Naive thymus-derived CD4-positive, alpha-beta T cell (primary cell): ENCODE measurements at regions of chr15 and their contacts with region 1.

Region 1: DNA sequence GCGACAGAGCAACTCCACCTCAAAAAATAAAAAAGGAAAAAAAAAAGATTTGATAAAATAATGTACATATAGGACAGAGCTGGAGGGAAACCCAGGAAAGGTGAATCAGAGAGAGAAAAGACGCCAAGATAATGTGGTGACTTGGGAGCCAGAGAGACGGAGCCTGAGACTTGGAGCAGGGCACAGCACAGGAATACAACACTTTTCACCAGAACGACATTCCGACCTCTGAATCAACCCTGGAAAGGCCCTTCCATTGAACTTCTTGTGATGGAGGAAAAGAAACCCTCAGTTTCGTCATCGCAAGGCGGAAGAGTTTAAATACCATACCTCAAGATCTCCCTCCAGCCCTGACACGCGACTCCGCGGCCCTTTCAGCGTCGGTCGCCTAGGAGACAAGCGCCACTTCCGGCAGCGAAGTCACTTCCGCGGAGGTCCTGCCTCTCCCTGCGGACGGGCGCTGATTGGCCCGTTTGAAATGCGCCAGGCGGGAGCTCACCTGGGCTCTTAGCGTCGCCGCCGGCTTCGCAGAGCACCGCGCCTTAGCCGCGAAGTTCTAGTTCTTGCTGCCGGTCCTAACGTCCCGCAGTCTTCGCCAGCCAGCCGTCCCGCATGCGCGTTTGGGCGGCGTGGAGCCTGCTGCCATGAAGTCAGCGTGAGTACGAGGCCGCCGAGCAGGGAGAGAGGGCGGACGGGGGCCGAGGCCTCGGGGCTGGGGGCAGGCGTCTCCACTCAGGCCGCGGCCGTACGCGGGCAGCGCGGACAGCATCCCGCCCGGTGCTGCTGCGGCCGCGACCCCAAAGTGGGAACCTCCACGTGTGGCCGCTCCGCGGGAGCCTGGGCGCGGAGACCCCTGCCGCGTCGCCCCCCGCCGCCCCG is at the start of gene KIF23:
- DNase-seq: peak; percentile 84 to 93 (median 90)
- ATAC-seq: peak; percentile 98
- H3K4me3 ChIP-seq: peak within 1 kb of the TSS; percentile 66
- H3K4me3 Mint-ChIP-seq: peak within 1 kb of the TSS; percentile 81 to 88 (median 86)
- H3K27ac ChIP-seq: no peak within 1 kb of the TSS
- H3K27ac Mint-ChIP-seq: peak within 1 kb of the TSS in 7 of 9 donors; percentile 34 to 86 (median 78)
- H3K4me1 ChIP-seq: peaks cover 0 to 4% of the 10 kb centered on the region in 2 donors
- H3K4me1 Mint-ChIP-seq: peaks cover 0 to 36% (median 7%) of the 10 kb centered on the region in 7 donors
- H3K27me3 ChIP-seq: peaks cover 0 to 9% of the 10 kb centered on the region in 2 donors
- H3K27me3 Mint-ChIP-seq: peaks cover 8 to 22% (median 10%) of the 10 kb centered on the region in 5 donors
- total RNA-seq, gene KIF23: 0.30 to 39.4 (median 0.72) TPM in 4 of 5 experiments, not detected in the other

Region 2: GRCh38 chr15:69452692-69453521 is 38.8 kb after region 1 on chr15 and contains the start of gene RPLP1:
- CTCF ChIA-PET with region 1: interaction called, 5 read pairs
- POLR2A ChIA-PET with region 1: interaction called, 15 read pairs
- intact Hi-C with region 1: loop called (anchors 1 kb)
- DNase-seq: peak; percentile 93 to 97 (median 96)
- ATAC-seq: peak; percentile 93
- H3K4me3 ChIP-seq: peak within 1 kb of the TSS; percentile 82
- H3K4me3 Mint-ChIP-seq: peak within 1 kb of the TSS; percentile 91 to 100 (median 99)
- H3K27ac ChIP-seq: peak within 1 kb of the TSS; percentile 84
- H3K27ac Mint-ChIP-seq: peak within 1 kb of the TSS; percentile 96 to 100 (median 98)
- H3K4me1 ChIP-seq: peaks cover 14 to 33% of the 10 kb centered on the region in 2 donors
- H3K4me1 Mint-ChIP-seq: peaks cover 29 to 52% (median 42%) of the 10 kb centered on the region in 7 donors
- H3K27me3 ChIP-seq: no peaks in the 10 kb centered on the region
- H3K27me3 Mint-ChIP-seq: no peaks in the 10 kb centered on the region
- total RNA-seq, gene RPLP1: 1,719 to 2,941 (median 2,467) TPM

Region 3: GRCh38 chr15:69462493-69463181 is 48.6 kb after region 1 on chr15:
- CTCF ChIA-PET with region 1: no interaction called
- POLR2A ChIA-PET with region 1: interaction called, 3 read pairs
- intact Hi-C with region 1: loop called in 1 of 2 experiments (anchors 1 kb)
- DNase-seq: peak; percentile 84 to 90 (median 89)
- ATAC-seq: peak; percentile 99
- H3K4me3 ChIP-seq: peak overlapping the region; percentile 84
- H3K4me3 Mint-ChIP-seq: peak overlapping the region; percentile 87 to 95 (median 92)
- H3K27ac ChIP-seq: peak overlapping the region; percentile 91
- H3K27ac Mint-ChIP-seq: peak overlapping the region; percentile 79 to 97 (median 91)
- H3K4me1 ChIP-seq: peaks cover 10 to 17% of the 10 kb centered on the region in 2 donors
- H3K4me1 Mint-ChIP-seq: peaks cover 10 to 51% (median 37%) of the 10 kb centered on the region in 7 donors
- H3K27me3 ChIP-seq: no peaks in the 10 kb centered on the region
- H3K27me3 Mint-ChIP-seq: peaks cover 0 to 17% (median 0%) of the 10 kb centered on the region in 5 donors

Region 4: GRCh38 chr15:69576035-69576526 is 162.0 kb after region 1 on chr15:
- CTCF ChIA-PET with region 1: no interaction called
- POLR2A ChIA-PET with region 1: no interaction called
- intact Hi-C with region 1: no loop called
- DNase-seq: peak; percentile 38 to 69 (median 58)
- ATAC-seq: peak; percentile 87
- H3K4me3 ChIP-seq: no peak overlapping the region
- H3K4me3 Mint-ChIP-seq: no peak overlapping the region
- H3K27ac ChIP-seq: no peak overlapping the region
- H3K27ac Mint-ChIP-seq: peak overlapping the region in 3 of 9 donors; percentile 23 to 38 (median 24)
- H3K4me1 ChIP-seq: peaks cover 7 to 9% of the 10 kb centered on the region in 2 donors
- H3K4me1 Mint-ChIP-seq: peaks cover 14 to 44% (median 30%) of the 10 kb centered on the region in 7 donors
- H3K27me3 ChIP-seq: no peaks in the 10 kb centered on the region
- H3K27me3 Mint-ChIP-seq: peaks cover 0 to 11% (median 0%) of the 10 kb centered on the region in 5 donors